AG04449 (cell line): ENCODE measurements at regions of chr5 and their contacts with region 1.

Region 1: DNA sequence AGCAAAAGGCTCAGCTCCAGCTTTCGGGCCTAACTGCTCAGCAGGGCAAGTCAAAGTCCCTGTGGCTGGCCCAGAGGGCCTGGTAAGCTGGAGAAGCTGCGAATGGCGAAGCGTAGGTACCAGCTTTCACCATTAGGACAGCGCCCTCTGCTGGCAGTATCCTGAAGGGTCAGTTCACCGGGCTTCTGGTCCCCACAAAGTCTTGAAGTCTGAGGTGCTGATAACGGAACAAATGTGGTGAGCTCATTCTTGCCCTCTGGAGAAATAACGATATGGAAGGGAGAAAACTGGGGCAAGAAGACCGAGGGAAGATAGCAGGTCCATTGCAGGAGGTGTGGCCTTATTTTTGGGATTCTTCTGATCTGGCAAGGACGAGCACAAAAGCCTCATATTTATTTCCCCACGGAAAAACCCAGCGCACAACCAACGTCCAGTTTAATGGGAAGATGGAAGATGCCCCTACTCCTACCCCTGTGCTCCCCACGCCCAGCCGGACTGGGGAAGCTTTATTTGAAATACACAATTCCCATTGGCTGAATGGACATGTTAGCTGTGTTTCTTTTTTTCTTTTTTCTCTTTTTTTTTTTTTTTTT is 7.2 kb downstream of the SOWAHA start:
- DNase-seq: peak; percentile 37
- H3K4me3 ChIP-seq: no peak overlapping the region
- CTCF ChIP-seq: peak; percentile 82

Region 2: GRCh38 chr5:132506094-132506692 is 314.1 kb before region 1 on chr5:
- CTCF ChIA-PET with region 1: interaction called, 14 read pairs
- POLR2A ChIA-PET with region 1: no interaction called
- DNase-seq: peak; percentile 93
- H3K4me3 ChIP-seq: 0 out of 2 replicates have a peak overlapping the region, but pooled peaks have one; percentile 8
- CTCF ChIP-seq: peak; percentile 79

Region 3: DNA sequence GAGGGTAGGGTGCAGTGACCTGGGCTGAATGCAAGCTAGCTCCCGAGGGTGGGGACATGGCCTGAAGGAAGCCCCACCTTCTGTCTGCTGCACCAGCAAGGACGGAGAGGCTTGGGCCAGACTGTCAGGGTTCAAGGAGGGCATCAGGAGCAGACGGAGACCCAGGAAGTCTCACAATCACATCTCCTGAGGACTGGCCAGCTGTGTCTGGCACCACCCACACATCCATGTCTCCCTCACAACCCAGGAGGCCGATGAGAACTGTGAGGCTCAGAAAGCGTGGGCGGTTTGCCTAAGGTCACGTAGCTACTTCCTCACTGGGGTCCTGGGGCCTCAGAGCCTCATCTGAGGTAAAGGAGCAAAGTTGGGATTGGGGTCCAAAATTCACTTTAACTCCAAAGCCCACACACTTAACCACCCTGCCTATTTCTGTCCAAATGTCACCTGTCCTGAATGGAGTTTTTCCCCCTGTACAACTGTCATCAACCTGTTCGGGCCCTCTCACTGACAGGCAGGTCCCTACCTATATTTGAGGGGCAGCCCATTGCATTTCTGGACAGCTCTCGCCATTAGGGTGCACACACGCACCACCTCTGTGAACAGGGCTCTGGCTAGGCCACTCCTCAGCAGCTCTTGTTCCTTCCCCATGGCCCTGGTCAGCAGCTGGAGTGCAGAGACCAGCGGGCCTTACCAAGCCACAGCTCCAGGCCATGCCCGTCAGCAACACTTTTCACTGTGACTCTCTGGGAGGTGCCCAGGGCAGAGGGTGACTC is 158.8 kb before region 1 on chr5:
- CTCF ChIA-PET with region 1: interaction called, 20 read pairs
- POLR2A ChIA-PET with region 1: no interaction called
- DNase-seq: no peak
- H3K4me3 ChIP-seq: no peak overlapping the region
- CTCF ChIP-seq: no peak

Region 4: DNA sequence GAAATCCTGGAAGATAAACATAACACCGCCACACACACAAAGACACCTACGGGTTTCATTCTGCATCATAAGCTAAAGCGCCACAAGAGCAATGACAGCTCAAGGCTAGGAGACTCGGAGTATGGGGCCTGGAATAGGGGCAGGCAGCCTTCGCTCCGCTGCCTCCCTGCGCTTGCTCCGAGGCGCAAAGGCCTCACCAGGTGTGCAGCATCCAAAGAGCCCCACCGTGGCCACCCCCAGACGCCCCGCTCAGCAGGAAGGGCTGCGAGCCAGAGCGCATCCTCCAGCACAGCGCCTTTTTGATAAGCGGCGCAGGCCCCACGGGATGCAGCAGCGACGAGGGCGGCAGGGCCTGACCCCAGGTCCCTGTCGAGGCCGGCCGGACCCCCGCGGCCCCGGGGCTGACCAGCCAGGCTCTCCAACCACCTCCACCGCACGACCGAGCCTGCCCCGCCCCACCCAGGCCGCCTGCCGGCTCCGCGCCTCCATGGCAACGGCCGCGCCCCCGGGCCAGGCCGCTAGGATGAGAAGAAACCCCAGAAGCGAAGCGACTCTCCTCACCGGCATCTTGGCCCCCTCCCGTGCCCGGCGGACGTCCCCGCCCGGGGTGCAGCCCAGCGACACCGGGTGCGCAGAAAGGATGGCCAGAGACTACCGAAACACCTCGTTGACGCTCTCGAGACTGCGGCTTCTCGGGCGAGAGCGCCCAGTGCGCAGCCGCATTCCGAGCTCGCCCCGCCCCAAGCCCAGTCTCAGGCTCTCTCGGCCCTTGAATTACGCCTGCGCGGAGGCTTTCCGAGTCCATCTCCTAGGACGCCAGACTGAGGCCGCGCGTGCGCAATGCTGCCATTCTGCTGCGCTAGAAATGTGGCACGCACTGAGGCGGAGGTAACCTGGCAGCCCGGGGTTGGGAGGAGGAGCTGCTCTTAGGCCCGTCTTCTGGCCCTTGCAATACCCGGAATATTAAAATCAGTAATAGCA is 83.1 kb before region 1 on chr5 and contains the start of gene KIF3A:
- CTCF ChIA-PET with region 1: interaction called, 317 read pairs
- POLR2A ChIA-PET with region 1: no interaction called
- DNase-seq: peak; percentile 38
- H3K4me3 ChIP-seq: peak within 1 kb of the TSS; percentile 91
- CTCF ChIP-seq: no peak

Region 5: GRCh38 chr5:132777209-132778069 is 42.8 kb before region 1 on chr5 and contains the start of gene SEPTIN8:
- CTCF ChIA-PET with region 1: interaction called, 51 read pairs
- POLR2A ChIA-PET with region 1: no interaction called
- DNase-seq: no peak
- H3K4me3 ChIP-seq: peak within 1 kb of the TSS; percentile 72
- CTCF ChIP-seq: no peak

Region 6: DNA sequence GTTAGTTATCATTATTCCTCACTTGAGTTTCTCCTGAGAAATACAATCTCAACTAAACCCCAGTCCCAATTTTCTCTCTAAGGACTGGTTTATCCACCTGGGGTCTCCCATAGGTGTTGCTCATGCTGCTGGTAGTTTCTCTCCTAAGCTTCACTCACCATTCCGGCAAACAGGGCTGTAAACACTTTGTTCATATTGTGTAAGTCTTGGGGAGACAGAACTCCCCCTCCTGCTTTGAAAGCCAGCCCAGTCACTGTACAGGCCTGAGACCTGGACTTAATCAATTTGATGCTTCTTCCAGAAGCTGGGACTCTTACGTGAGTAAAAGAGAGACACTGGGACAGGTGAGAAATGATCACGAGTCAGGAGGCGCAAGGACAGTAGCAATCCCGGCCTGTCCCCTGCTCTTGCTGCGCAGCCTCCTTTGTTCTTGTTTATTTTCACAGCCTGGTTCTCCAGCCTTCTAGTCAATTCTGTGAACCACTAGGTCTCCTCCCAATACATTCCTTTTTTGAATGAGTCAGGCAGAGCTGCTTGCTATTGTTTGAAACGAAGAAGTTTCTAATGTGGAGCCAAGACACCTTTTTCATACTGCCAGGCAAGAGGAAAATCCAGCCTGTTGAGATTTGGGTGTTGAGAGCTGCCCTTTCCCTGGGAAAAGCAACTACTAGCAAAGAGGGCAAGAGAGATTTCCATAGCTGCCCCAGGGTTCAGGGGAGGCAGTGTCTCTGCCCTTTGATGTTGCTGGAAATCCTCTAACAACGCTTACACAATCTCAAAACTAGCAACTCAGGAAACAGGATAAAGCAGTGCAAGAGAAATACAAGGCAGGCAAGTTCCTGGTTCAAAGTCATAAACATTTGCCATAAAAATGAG is 19.4 kb after region 1 on chr5:
- CTCF ChIA-PET with region 1: interaction called, 197 read pairs
- POLR2A ChIA-PET with region 1: no interaction called
- DNase-seq: peak; percentile 21
- H3K4me3 ChIP-seq: no peak overlapping the region
- CTCF ChIP-seq: no peak

Region 7: GRCh38 chr5:132859889-132860437 is 39.7 kb after region 1 on chr5:
- CTCF ChIA-PET with region 1: interaction called, 15 read pairs
- POLR2A ChIA-PET with region 1: no interaction called
- DNase-seq: no peak
- H3K4me3 ChIP-seq: no peak overlapping the region
- CTCF ChIP-seq: no peak